B cell (primary cell): ENCODE measurements at regions of chr9 and their contacts with region 1.

Region 1: DNA sequence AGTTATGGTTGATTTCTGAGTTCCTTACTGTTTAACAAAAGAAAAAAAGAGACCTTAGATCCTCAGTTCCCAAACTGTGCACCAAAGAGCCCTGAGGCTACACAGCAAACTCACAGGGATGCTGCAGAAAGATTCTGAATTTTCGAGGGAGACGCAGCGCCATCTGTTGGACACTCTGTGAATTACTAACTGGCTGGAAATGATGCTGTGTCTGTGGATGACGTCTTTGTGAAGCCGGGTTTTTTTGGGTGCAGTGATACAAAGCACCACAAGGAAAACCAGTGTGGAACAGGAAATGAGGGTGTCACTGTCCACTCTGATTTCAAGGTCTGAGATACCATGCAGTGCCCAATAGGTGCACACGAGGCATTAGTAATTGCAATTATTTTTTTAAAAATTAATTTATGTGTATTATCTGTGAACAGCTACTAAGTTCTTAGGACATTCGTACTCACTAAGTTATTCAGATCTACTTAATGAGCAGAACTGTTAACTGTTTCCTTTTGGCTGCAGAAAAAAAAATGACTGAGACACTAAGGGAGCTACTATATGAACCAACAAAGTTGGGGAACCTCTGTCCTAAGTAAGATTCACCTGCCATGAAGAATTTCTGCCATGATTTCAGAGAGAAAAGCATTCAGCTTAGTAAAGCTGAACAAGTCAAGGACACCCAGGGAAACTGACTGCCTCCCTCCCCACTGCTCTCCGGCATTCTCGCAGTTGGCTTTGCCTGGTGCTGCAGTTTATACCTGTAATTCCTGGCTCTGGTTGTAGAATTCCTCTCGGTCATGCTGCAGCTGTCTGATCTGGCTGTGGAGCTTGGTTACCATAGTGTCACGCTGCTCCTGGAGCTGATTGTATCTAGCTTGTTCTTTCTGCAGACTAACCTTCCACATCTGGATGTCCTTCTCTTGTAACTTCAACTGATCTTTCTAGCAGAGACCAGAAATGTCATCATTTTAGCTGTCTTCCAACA is 23.4 kb downstream of the SPACA9 start:
- DNase-seq: peak; percentile 89
- ATAC-seq: peak; percentile 96
- H3K4me3 ChIP-seq: no peak overlapping the region
- H3K4me3 Mint-ChIP-seq: no peak overlapping the region
- H3K27ac ChIP-seq: peak overlapping the region in 1 of 2 donors; percentile 35
- H3K27ac Mint-ChIP-seq: no peak overlapping the region
- H3K4me1 ChIP-seq: peaks cover 0 to 5% of the 10 kb centered on the region in 2 donors
- H3K4me1 Mint-ChIP-seq: peaks cover 9% of the 10 kb centered on the region
- H3K27me3 ChIP-seq: no peaks in the 10 kb centered on the region
- H3K27me3 Mint-ChIP-seq: no peaks in the 10 kb centered on the region
- CTCF ChIP-seq: peak; percentile 92

Region 2: DNA sequence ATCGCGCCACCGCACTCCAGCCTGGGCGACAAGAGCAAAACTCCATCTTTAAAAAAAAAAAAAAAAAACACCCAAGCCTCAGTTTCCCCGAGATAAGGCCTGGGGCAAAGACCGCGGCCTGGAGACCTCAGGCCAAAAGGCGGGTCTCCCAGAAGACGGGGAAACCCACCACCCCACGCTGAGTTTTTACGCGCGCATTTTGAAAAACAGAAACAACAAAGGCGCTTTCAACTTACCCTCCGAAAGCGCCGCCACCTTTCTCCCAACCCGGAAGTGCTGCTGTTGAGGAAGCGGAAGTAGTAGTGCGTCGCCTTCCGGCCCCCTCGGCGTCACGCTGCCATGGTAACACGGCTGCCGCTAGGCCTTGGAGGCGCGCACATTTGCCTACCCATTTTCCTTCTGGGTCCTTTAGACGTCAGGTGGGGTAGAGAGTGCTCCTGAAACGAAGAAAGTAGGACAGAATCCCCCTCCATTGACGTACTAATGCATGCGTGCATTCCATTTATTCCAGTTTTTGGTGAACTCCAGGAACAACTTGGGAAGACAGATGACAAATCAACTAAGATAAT is 495.5 kb before region 1 on chr9 and contains the start of gene TTF1:
- CTCF ChIA-PET with region 1: no interaction called
- POLR2A ChIA-PET with region 1: no interaction called
- intact Hi-C with region 1: loop called (anchors 5 kb)
- DNase-seq: peak; percentile 97
- ATAC-seq: peak; percentile 79
- H3K4me3 ChIP-seq: peak within 1 kb of the TSS; percentile 72 to 84 (median 77)
- H3K4me3 Mint-ChIP-seq: peak within 1 kb of the TSS; percentile 96
- H3K27ac ChIP-seq: peak within 1 kb of the TSS; percentile 52 to 84
- H3K27ac Mint-ChIP-seq: peak within 1 kb of the TSS; percentile 95
- H3K4me1 ChIP-seq: peaks cover 43 to 50% of the 10 kb centered on the region in 2 donors
- H3K4me1 Mint-ChIP-seq: peaks cover 49% of the 10 kb centered on the region
- H3K27me3 ChIP-seq: peaks cover 0 to 10% (median 2%) of the 10 kb centered on the region in 4 experiments
- H3K27me3 Mint-ChIP-seq: no peaks in the 10 kb centered on the region
- CTCF ChIP-seq: no peak
- total RNA-seq, gene TTF1: 26.3 and 28.5 TPM in 2 replicates

Region 3: GRCh38 chr9:132768932-132769905 is 132.9 kb before region 1 on chr9:
- CTCF ChIA-PET with region 1: interaction called, 7 read pairs
- POLR2A ChIA-PET with region 1: interaction called, 11 read pairs
- intact Hi-C with region 1: no loop called
- DNase-seq: peak; percentile 78
- ATAC-seq: peak; percentile 74
- H3K4me3 ChIP-seq: peak overlapping the region; percentile 76 to 96 (median 85)
- H3K4me3 Mint-ChIP-seq: peak overlapping the region; percentile 100
- H3K27ac ChIP-seq: peak overlapping the region; percentile 74 to 84
- H3K27ac Mint-ChIP-seq: peak overlapping the region; percentile 100
- H3K4me1 ChIP-seq: peaks cover 10 to 11% of the 10 kb centered on the region in 2 donors
- H3K4me1 Mint-ChIP-seq: peaks cover 9% of the 10 kb centered on the region
- H3K27me3 ChIP-seq: no peaks in the 10 kb centered on the region
- H3K27me3 Mint-ChIP-seq: peaks cover 5% of the 10 kb centered on the region
- CTCF ChIP-seq: peak; percentile 73

Region 4: GRCh38 chr9:132849185-132849706 is 52.9 kb before region 1 on chr9:
- CTCF ChIA-PET with region 1: interaction called, 38 read pairs
- POLR2A ChIA-PET with region 1: no interaction called
- intact Hi-C with region 1: loop called (anchors 1 kb)
- DNase-seq: no peak
- ATAC-seq: no peak
- H3K4me3 ChIP-seq: no peak overlapping the region
- H3K4me3 Mint-ChIP-seq: peak overlapping the region; percentile 48
- H3K27ac ChIP-seq: no peak overlapping the region
- H3K27ac Mint-ChIP-seq: peak overlapping the region; percentile 47
- H3K4me1 ChIP-seq: peaks cover 0 to 36% of the 10 kb centered on the region in 2 donors
- H3K4me1 Mint-ChIP-seq: peaks cover 21% of the 10 kb centered on the region
- H3K27me3 ChIP-seq: no peaks in the 10 kb centered on the region
- H3K27me3 Mint-ChIP-seq: no peaks in the 10 kb centered on the region
- CTCF ChIP-seq: no peak

Region 5: GRCh38 chr9:132885718-132886333 is 16.3 kb before region 1 on chr9:
- CTCF ChIA-PET with region 1: interaction called, 30 read pairs
- POLR2A ChIA-PET with region 1: interaction called, 4 read pairs
- intact Hi-C with region 1: no loop called
- DNase-seq: peak; percentile 61
- ATAC-seq: no peak
- H3K4me3 ChIP-seq: no peak overlapping the region
- H3K4me3 Mint-ChIP-seq: no peak overlapping the region
- H3K27ac ChIP-seq: peak overlapping the region in 1 of 2 donors; percentile 45
- H3K27ac Mint-ChIP-seq: peak overlapping the region; percentile 80
- H3K4me1 ChIP-seq: peaks cover 42 to 50% of the 10 kb centered on the region in 2 donors
- H3K4me1 Mint-ChIP-seq: peaks cover 45% of the 10 kb centered on the region
- H3K27me3 ChIP-seq: no peaks in the 10 kb centered on the region
- H3K27me3 Mint-ChIP-seq: no peaks in the 10 kb centered on the region
- CTCF ChIP-seq: no peak